Endothelial cell of umbilical vein (primary cell): ENCODE measurements at regions of chr6 and their contacts with region 1.

Region 1: DNA sequence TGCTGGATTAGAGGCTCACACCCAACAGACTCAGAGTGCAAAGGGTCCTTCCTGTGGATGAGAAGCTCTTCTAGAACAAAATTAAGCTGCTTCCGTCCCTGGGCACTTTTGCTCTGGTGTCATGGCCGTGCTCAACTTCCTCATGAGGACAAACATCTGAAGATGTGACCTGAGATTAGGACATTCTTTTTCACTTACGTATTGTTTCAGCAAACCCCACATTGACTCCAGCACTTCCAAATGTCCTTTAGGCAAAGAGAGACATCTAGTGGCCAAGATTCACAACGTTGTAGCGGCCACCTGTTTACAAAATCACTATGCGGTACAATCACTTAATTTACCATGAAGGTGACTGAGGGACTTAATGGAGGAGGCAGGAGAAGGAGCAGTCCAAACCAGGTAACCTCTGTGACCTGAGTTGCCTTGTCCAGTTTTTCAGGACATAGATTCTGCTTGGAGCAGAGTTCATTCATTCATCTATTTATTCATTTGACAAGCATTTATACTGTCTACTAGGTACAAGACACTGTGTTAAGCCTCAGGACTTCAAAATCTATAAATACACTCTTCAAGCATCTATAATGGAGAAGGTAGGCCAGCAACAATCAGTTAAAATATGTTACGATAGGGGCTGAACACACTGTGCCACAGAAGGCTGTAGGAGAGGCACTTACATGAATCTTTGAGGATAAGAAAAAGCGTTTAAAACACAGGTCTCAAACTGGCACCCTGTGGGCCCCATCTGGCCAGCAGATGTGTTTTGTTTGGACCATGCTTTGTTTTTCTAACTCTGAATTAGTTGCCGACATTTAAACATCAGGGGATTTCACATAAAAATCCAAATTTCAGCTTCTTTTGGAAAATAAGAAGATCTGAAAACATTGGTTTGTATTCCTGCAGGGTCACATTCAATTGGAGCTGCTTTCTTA is 5.6 kb upstream of the ADGRF1 start:
- DNase-seq: peak; percentile 94
- H3K4me3 ChIP-seq: no peak overlapping the region
- H3K27ac ChIP-seq: peak overlapping the region; percentile 86
- H3K4me1 ChIP-seq: peaks cover 46% of the 10 kb centered on the region
- H3K27me3 ChIP-seq: no peaks in the 10 kb centered on the region
- CTCF ChIP-seq: peak; percentile 73 to 83
- POLR2A ChIP-seq: no peak

Region 2: DNA sequence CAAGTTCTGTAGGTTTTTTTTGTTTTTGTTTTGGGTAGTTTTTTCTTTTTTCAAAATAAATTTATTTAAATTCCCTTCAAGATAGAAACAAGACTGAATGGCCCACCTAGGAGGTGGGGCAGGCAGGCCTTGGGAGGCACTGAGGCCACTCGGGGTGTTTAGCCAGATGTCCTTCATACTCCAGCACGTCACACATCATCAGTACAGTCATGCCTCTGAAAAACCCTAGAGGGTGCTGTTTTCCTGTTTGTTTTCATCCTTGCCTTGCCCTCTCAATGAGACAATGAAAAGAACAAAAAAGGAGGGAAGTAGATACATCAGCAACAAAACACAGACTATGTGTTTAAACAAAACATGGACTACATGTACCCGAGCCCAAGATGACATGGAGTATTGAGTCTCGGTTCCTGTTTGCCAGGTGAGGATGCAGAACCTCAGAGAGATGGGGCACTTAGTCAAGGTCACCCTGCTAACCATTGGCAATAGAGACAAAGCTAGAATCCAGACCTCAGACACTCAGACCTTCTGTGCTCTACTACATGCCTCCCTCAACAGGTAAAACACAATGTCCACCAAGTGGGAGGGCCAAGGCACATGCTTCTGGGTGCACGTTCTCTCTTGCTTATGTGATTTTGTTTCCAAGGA is 1005.3 kb before region 1 on chr6:
- CTCF ChIA-PET with region 1: no interaction called
- POLR2A ChIA-PET with region 1: no interaction called
- dilution Hi-C with region 1: no loop called
- intact Hi-C with region 1: loop called (anchors 5 kb)
- DNase-seq: peak; percentile 73
- H3K4me3 ChIP-seq: no peak overlapping the region
- H3K27ac ChIP-seq: no peak overlapping the region
- H3K4me1 ChIP-seq: peaks cover 29% of the 10 kb centered on the region
- H3K27me3 ChIP-seq: no peaks in the 10 kb centered on the region
- CTCF ChIP-seq: peak; percentile 52 to 60
- POLR2A ChIP-seq: no peak

Region 3: GRCh38 chr6:46290421-46291274 is 757.1 kb before region 1 on chr6:
- CTCF ChIA-PET with region 1: no interaction called
- POLR2A ChIA-PET with region 1: no interaction called
- dilution Hi-C with region 1: no loop called
- intact Hi-C with region 1: loop called (anchors 2 kb)
- DNase-seq: peak; percentile 88
- H3K4me3 ChIP-seq: no peak overlapping the region
- H3K27ac ChIP-seq: peak overlapping the region; percentile 80
- H3K4me1 ChIP-seq: peaks cover 31% of the 10 kb centered on the region
- H3K27me3 ChIP-seq: peaks cover 5 to 14% of the 10 kb centered on the region in 2 experiments
- CTCF ChIP-seq: no peak
- POLR2A ChIP-seq: no peak

Region 4: DNA sequence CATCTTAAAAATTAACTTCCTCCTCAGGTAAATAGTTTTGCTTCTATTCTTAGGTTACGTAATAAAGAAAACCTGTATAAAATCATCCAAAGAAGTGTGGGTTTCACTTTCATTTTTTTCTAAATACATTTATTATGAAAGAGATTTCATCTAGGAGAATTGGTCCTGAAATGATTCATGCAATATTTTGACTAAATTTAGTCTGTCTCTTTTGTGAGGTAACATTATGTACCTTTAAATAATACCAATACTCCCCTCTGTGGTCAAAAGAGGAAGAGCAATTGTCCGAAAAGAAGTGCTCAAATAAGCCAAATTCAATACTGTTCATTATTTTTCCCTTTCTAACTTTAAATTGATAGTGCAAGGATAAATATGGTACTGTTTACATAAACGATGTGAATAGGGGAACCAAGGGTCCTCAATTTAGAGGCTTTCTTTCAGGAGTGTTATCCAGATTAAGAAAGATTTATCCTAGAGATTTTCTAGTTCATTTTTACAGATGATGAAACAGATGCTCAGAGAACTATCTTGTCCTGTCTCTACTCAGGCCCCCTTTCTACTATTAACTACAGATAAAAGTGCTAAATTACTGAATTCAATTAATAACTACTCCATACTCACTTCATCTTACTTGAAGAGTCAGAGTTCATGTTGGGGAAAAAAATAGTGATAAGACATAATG is 421.4 kb before region 1 on chr6:
- CTCF ChIA-PET with region 1: no interaction called
- POLR2A ChIA-PET with region 1: no interaction called
- dilution Hi-C with region 1: no loop called
- intact Hi-C with region 1: loop called (anchors 2 kb)
- DNase-seq: peak; percentile 27
- H3K4me3 ChIP-seq: no peak overlapping the region
- H3K27ac ChIP-seq: no peak overlapping the region
- H3K4me1 ChIP-seq: no peaks in the 10 kb centered on the region
- H3K27me3 ChIP-seq: no peaks in the 10 kb centered on the region
- CTCF ChIP-seq: peak in 1 of 2 donors; percentile 16
- POLR2A ChIP-seq: no peak

Region 5: DNA sequence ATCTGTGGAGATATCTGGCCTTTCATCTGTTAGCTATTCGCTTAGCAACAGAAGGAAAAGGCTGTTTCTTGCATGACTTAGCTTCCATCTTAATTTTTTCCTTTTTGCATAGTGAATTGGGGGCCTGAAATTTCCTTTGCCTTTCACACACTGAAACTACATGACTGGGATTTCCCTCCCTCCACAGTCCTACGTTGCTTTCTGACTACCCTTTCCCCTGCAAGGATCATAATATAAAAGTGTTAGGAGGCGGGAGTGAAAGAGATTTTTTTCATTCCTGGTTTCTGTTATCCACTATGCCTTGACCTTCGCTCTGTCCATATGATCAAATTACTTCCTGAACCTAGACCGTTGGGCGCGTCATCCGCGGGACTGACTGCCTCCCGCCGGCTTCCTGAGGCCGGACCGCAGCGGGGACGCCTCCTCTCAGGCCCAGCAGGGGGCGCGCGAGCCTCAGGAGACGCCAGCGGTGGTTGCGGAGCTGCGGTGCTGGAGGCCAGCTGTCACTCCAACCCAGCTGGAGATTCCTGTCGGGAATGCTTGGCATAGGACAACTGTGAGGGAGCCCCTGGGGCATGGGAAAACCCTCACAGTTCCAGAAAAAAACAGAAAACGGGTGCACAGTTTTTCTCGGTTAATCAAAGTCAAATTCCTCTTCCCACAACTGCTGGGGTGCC is 198.9 kb before region 1 on chr6:
- CTCF ChIA-PET with region 1: interaction called, 116 read pairs
- POLR2A ChIA-PET with region 1: no interaction called
- dilution Hi-C with region 1: no loop called
- intact Hi-C with region 1: loop called (anchors 1 kb)
- DNase-seq: peak; percentile 82
- H3K4me3 ChIP-seq: no peak overlapping the region
- H3K27ac ChIP-seq: peak overlapping the region; percentile 54
- H3K4me1 ChIP-seq: peaks cover 31% of the 10 kb centered on the region
- H3K27me3 ChIP-seq: no peaks in the 10 kb centered on the region
- CTCF ChIP-seq: peak; percentile 97
- POLR2A ChIP-seq: no peak

Region 6: DNA sequence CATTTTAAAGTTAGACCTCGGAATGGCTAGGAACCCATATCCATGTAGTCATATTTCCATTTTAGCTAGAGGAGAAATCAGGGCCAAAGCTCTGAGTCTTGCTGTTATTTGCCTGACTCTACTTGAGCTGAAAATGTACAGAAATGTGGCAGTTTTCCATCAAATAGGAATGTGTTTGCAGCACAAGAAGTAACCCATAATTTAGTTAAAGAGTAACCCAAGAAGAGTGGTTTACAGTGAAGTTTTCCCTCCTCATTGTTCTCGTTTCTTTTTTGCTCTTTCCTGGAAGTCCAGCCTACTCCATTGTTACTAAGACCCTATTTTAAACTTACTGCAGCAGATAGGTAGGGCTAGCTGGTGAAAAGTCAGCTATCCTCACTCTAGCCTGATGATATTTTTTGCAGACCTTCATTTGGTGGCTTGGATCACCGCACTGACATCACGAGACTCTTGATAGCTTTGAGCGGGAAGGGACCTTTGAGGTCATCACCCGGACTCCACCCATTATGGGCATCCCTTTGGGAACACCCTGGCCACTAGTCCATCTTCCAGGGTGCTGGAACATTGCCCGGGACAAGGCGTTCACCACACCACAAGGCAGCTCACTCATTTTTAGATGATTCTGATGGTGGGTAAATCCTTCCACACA is 98.0 kb before region 1 on chr6:
- CTCF ChIA-PET with region 1: interaction called, 4 read pairs
- POLR2A ChIA-PET with region 1: no interaction called
- dilution Hi-C with region 1: no loop called
- intact Hi-C with region 1: loop called (anchors 1 kb)
- DNase-seq: peak; percentile 50
- H3K4me3 ChIP-seq: no peak overlapping the region
- H3K27ac ChIP-seq: peak overlapping the region; percentile 98
- H3K4me1 ChIP-seq: peaks cover 44% of the 10 kb centered on the region
- H3K27me3 ChIP-seq: no peaks in the 10 kb centered on the region
- CTCF ChIP-seq: no peak
- POLR2A ChIP-seq: no peak

Region 7: GRCh38 chr6:47309291-47310130 is 261.8 kb after region 1 on chr6 and contains the start of gene TNFRSF21:
- CTCF ChIA-PET with region 1: interaction called, 5 read pairs
- POLR2A ChIA-PET with region 1: no interaction called
- dilution Hi-C with region 1: no loop called
- intact Hi-C with region 1: loop called (anchors 1 kb)
- DNase-seq: peak; percentile 95
- H3K4me3 ChIP-seq: peak within 1 kb of the TSS; percentile 49 to 86 (median 80)
- H3K27ac ChIP-seq: peak within 1 kb of the TSS; percentile 60
- H3K4me1 ChIP-seq: peaks cover 16% of the 10 kb centered on the region
- H3K27me3 ChIP-seq: no peaks in the 10 kb centered on the region
- CTCF ChIP-seq: peak; percentile 93 to 94
- POLR2A ChIP-seq: peak; percentile 82
- total RNA-seq, gene TNFRSF21: 40.6 and 52.3 TPM in 2 replicates